CD4-positive, alpha-beta T cell (primary cell): ENCODE measurements at regions of chr6 and their contacts with region 1.

Region 1: DNA sequence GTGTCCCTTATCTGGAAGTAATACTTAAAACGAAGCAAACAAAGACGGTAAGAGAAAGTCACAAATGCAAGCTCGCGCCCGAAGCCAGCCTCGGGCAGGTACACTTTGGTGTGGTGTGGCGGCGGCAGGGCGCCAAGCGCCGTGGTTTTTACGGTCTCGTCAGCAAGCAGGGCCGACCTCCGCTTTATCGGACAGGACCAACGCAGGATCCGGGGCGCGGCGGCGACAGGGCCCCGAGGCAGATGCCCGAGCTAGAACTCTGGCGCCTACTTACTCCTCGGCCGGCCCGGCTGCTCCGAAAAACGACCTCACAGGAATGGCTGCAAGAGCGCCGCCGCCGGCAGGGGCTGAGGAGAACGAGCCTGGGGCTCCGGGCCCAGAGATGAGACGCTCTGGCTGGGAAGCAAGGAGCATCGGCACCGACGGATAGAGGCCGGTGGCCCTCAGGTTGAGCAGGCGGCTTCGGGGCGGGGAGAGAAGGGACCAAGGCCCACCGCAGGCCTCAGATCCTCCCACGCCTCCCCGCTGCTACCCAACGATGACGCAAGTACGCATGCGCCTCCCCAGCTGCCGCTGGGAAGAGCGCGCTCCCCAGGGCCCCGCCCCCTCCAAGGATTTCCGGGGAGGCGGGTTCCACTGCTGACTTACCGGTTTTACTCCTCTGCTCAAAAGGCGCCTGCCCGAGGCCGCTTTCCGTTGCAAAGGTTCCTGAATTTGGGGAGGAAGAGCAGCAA is 60.6 kb downstream of the FAM217A start:
- DNase-seq: peak; percentile 91 to 99 (median 94)
- ATAC-seq: peak; percentile 63
- H3K4me3 ChIP-seq: peak overlapping the region; percentile 92
- H3K4me3 Mint-ChIP-seq: peak overlapping the region; percentile 98
- H3K27ac ChIP-seq: peak overlapping the region; percentile 96
- H3K27ac Mint-ChIP-seq: peak overlapping the region; percentile 96
- H3K4me1 ChIP-seq: peaks cover 48% of the 10 kb centered on the region
- H3K4me1 Mint-ChIP-seq: peaks cover 84% of the 10 kb centered on the region
- H3K27me3 ChIP-seq: no peaks in the 10 kb centered on the region
- H3K27me3 Mint-ChIP-seq: no peaks in the 10 kb centered on the region
- CTCF ChIP-seq: peak; percentile 38

Region 2: GRCh38 chr6:3118353-3119039 is 899.8 kb before region 1 on chr6 and contains the start of gene BPHL:
- CTCF ChIA-PET with region 1: no interaction called
- POLR2A ChIA-PET with region 1: interaction called, 3 read pairs
- intact Hi-C with region 1: loop called in 1 of 2 experiments (anchors 5 kb)
- DNase-seq: peak; percentile 98 to 100 (median 99)
- ATAC-seq: peak; percentile 90
- H3K4me3 ChIP-seq: peak within 1 kb of the TSS; percentile 67
- H3K4me3 Mint-ChIP-seq: peak within 1 kb of the TSS; percentile 93
- H3K27ac ChIP-seq: peak within 1 kb of the TSS; percentile 91 to 96
- H3K27ac Mint-ChIP-seq: peak within 1 kb of the TSS; percentile 91
- H3K4me1 ChIP-seq: peaks cover 15% of the 10 kb centered on the region
- H3K4me1 Mint-ChIP-seq: peaks cover 19% of the 10 kb centered on the region
- H3K27me3 ChIP-seq: no peaks in the 10 kb centered on the region
- H3K27me3 Mint-ChIP-seq: no peaks in the 10 kb centered on the region
- CTCF ChIP-seq: no peak
- total RNA-seq, gene BPHL: 5.2 to 5.7 TPM

Region 3: GRCh38 chr6:3456755-3457466 is 561.4 kb before region 1 on chr6 and contains the start of gene SLC22A23:
- CTCF ChIA-PET with region 1: no interaction called
- POLR2A ChIA-PET with region 1: no interaction called
- intact Hi-C with region 1: loop called in 1 of 2 experiments (anchors 10 kb)
- DNase-seq: peak; percentile 63 to 91 (median 77)
- ATAC-seq: peak; percentile 52
- H3K4me3 ChIP-seq: peak within 1 kb of the TSS; percentile 72
- H3K4me3 Mint-ChIP-seq: peak within 1 kb of the TSS; percentile 89
- H3K27ac ChIP-seq: no peak within 1 kb of the TSS
- H3K27ac Mint-ChIP-seq: peak within 1 kb of the TSS; percentile 63
- H3K4me1 ChIP-seq: peaks cover 36% of the 10 kb centered on the region
- H3K4me1 Mint-ChIP-seq: peaks cover 7% of the 10 kb centered on the region
- H3K27me3 ChIP-seq: peaks cover 6 to 15% of the 10 kb centered on the region in 2 experiments
- H3K27me3 Mint-ChIP-seq: peaks cover 15% of the 10 kb centered on the region
- CTCF ChIP-seq: peak; percentile 79
- total RNA-seq, gene SLC22A23: 13.4 to 13.6 TPM

Region 4: DNA sequence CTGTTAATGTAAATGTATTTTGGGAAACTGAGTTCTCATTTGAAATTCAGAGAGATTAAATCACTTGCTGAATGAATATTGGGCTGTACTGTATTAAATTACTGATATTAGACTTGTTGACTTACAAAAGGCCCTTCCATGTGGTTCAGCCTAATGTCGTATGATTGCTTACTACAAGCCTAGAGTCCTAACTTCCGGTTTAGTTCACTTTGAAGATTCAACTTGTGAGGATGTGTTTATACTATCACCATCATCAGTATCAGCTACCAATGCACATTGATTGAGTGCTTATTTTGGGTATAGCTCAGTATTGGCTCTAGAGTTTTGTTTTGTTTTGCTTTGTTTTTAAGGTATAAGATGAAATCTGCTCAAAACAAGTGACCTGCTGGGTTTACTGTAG is 12.3 kb after region 1 on chr6:
- CTCF ChIA-PET with region 1: interaction called, 8 read pairs
- POLR2A ChIA-PET with region 1: interaction called, 15 read pairs
- intact Hi-C with region 1: loop called in 1 of 2 experiments (anchors 1 kb)
- DNase-seq: peak in 3 of 14 experiments; percentile 48 to 55 (median 51)
- ATAC-seq: peak; percentile 77
- H3K4me3 ChIP-seq: no peak overlapping the region
- H3K4me3 Mint-ChIP-seq: peak overlapping the region; percentile 2
- H3K27ac ChIP-seq: no peak overlapping the region
- H3K27ac Mint-ChIP-seq: peak overlapping the region; percentile 62
- H3K4me1 ChIP-seq: peaks cover 37% of the 10 kb centered on the region
- H3K4me1 Mint-ChIP-seq: peaks cover 87% of the 10 kb centered on the region
- H3K27me3 ChIP-seq: no peaks in the 10 kb centered on the region
- H3K27me3 Mint-ChIP-seq: no peaks in the 10 kb centered on the region
- CTCF ChIP-seq: no peak

Region 5: GRCh38 chr6:4085332-4085700 is 67.0 kb after region 1 on chr6:
- CTCF ChIA-PET with region 1: no interaction called
- POLR2A ChIA-PET with region 1: no interaction called
- intact Hi-C with region 1: no loop called
- DNase-seq: no peak
- ATAC-seq: no peak
- H3K4me3 ChIP-seq: no peak overlapping the region
- H3K4me3 Mint-ChIP-seq: no peak overlapping the region
- H3K27ac ChIP-seq: no peak overlapping the region
- H3K27ac Mint-ChIP-seq: no peak overlapping the region
- H3K4me1 ChIP-seq: no peaks in the 10 kb centered on the region
- H3K4me1 Mint-ChIP-seq: no peaks in the 10 kb centered on the region
- H3K27me3 ChIP-seq: no peaks in the 10 kb centered on the region
- H3K27me3 Mint-ChIP-seq: peaks cover 5% of the 10 kb centered on the region
- CTCF ChIP-seq: no peak

Region 6: GRCh38 chr6:4135665-4136353 is 117.5 kb after region 1 on chr6:
- CTCF ChIA-PET with region 1: interaction called, 3 read pairs
- POLR2A ChIA-PET with region 1: interaction called, 50 read pairs
- intact Hi-C with region 1: loop called (anchors 2 to 5 kb)
- DNase-seq: peak; percentile 90 to 99 (median 94)
- ATAC-seq: peak; percentile 87
- H3K4me3 ChIP-seq: peak overlapping the region; percentile 82
- H3K4me3 Mint-ChIP-seq: peak overlapping the region; percentile 86
- H3K27ac ChIP-seq: peak overlapping the region; percentile 47 to 62
- H3K27ac Mint-ChIP-seq: peak overlapping the region; percentile 97
- H3K4me1 ChIP-seq: peaks cover 22% of the 10 kb centered on the region
- H3K4me1 Mint-ChIP-seq: peaks cover 50% of the 10 kb centered on the region
- H3K27me3 ChIP-seq: no peaks in the 10 kb centered on the region
- H3K27me3 Mint-ChIP-seq: no peaks in the 10 kb centered on the region
- CTCF ChIP-seq: no peak

Region 7: GRCh38 chr6:4169028-4169789 is 150.9 kb after region 1 on chr6:
- CTCF ChIA-PET with region 1: no interaction called
- POLR2A ChIA-PET with region 1: no interaction called
- intact Hi-C with region 1: no loop called
- DNase-seq: no peak
- ATAC-seq: no peak
- H3K4me3 ChIP-seq: no peak overlapping the region
- H3K4me3 Mint-ChIP-seq: no peak overlapping the region
- H3K27ac ChIP-seq: no peak overlapping the region
- H3K27ac Mint-ChIP-seq: no peak overlapping the region
- H3K4me1 ChIP-seq: no peaks in the 10 kb centered on the region
- H3K4me1 Mint-ChIP-seq: no peaks in the 10 kb centered on the region
- H3K27me3 ChIP-seq: no peaks in the 10 kb centered on the region
- H3K27me3 Mint-ChIP-seq: no peaks in the 10 kb centered on the region
- CTCF ChIP-seq: no peak

Region 8: GRCh38 chr6:5250911-5251310 is 1232.6 kb after region 1 on chr6:
- CTCF ChIA-PET with region 1: no interaction called
- POLR2A ChIA-PET with region 1: no interaction called
- intact Hi-C with region 1: loop called in 1 of 2 experiments (anchors 10 kb)
- DNase-seq: no peak
- ATAC-seq: no peak
- H3K4me3 ChIP-seq: no peak overlapping the region
- H3K4me3 Mint-ChIP-seq: no peak overlapping the region
- H3K27ac ChIP-seq: no peak overlapping the region
- H3K27ac Mint-ChIP-seq: no peak overlapping the region
- H3K4me1 ChIP-seq: no peaks in the 10 kb centered on the region
- H3K4me1 Mint-ChIP-seq: no peaks in the 10 kb centered on the region
- H3K27me3 ChIP-seq: no peaks in the 10 kb centered on the region
- H3K27me3 Mint-ChIP-seq: no peaks in the 10 kb centered on the region
- CTCF ChIP-seq: no peak